CD4-positive, alpha-beta T cell (primary cell): ENCODE measurements at regions of chr22 and their contacts with region 1.

Region 1: DNA sequence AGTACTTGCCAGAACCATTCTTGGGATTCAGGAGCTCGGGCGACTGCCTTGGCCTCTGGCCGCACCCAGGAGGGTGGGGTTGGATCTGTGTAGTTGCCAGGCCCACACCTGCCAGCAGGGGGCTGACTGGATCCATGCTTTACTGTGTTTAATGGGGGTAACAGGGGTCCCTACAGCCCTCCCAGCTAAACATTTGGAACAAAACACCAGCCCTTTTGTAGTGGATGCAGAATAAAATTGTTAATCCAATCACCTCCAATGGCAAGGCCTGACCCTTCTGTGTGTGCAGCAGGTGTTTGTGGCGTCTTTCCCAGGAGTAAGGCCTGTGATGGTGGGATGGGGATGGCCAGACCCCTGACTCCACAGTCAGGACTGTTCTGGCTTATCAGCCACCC is 22.5 kb downstream of the SUN2 start:
- DNase-seq: peak in 11 of 14 experiments; percentile 45 to 71 (median 54)
- ATAC-seq: peak; percentile 54
- H3K4me3 ChIP-seq: no peak overlapping the region
- H3K4me3 Mint-ChIP-seq: peak overlapping the region; percentile 4
- H3K27ac ChIP-seq: peak overlapping the region; percentile 14 to 35
- H3K27ac Mint-ChIP-seq: peak overlapping the region; percentile 88
- H3K4me1 ChIP-seq: peaks cover 54% of the 10 kb centered on the region
- H3K4me1 Mint-ChIP-seq: peaks cover 67% of the 10 kb centered on the region
- H3K27me3 ChIP-seq: no peaks in the 10 kb centered on the region
- H3K27me3 Mint-ChIP-seq: no peaks in the 10 kb centered on the region
- CTCF ChIP-seq: peak; percentile 87

Region 2: DNA sequence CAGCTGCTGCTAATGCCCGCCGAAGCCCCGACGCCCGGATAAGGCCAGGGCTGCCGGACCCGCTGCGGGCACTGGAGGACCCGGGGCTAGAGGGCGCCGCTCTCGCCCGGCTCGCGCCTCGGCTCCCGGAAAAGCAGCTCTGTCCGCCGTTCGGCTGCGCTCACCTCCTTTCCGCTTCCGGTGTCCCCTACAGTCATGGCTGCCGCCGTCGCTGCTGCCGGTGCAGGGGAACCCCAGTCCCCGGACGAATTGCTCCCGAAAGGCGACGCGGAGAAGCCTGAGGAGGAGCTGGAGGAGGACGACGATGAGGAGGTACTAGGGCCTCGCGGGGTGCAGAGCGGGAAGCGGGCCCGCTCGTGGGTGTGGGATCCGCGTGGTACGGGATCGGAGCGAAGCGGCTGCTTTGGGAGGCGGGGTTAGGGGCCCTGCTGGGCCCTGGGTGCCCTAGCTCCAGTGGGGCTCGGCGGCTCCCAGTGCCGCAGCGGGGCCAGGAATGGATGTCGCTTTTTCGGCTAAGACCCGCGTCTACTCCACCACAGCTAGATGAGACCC is 51.5 kb before region 1 on chr22 and contains the start of gene TOMM22:
- CTCF ChIA-PET with region 1: interaction called, 6 read pairs
- POLR2A ChIA-PET with region 1: interaction called, 19 read pairs
- intact Hi-C with region 1: no loop called
- DNase-seq: peak; percentile 67 to 92 (median 80)
- ATAC-seq: peak; percentile 88
- H3K4me3 ChIP-seq: peak within 1 kb of the TSS; percentile 98
- H3K4me3 Mint-ChIP-seq: peak within 1 kb of the TSS; percentile 98
- H3K27ac ChIP-seq: peak within 1 kb of the TSS; percentile 79 to 84
- H3K27ac Mint-ChIP-seq: peak within 1 kb of the TSS; percentile 87
- H3K4me1 ChIP-seq: peaks cover 18% of the 10 kb centered on the region
- H3K4me1 Mint-ChIP-seq: peaks cover 24% of the 10 kb centered on the region
- H3K27me3 ChIP-seq: no peaks in the 10 kb centered on the region
- H3K27me3 Mint-ChIP-seq: no peaks in the 10 kb centered on the region
- CTCF ChIP-seq: peak; percentile 65
- total RNA-seq, gene TOMM22: 53.7 to 54.8 TPM

Region 3: GRCh38 chr22:38718414-38718813 is 14.9 kb before region 1 on chr22:
- CTCF ChIA-PET with region 1: interaction called, 5 read pairs
- POLR2A ChIA-PET with region 1: interaction called, 48 read pairs
- intact Hi-C with region 1: no loop called
- DNase-seq: peak in 1 of 14 experiments; percentile 31
- ATAC-seq: peak; percentile 39
- H3K4me3 ChIP-seq: no peak overlapping the region
- H3K4me3 Mint-ChIP-seq: no peak overlapping the region
- H3K27ac ChIP-seq: no peak overlapping the region
- H3K27ac Mint-ChIP-seq: peak overlapping the region; percentile 15
- H3K4me1 ChIP-seq: peaks cover 20% of the 10 kb centered on the region
- H3K4me1 Mint-ChIP-seq: peaks cover 20% of the 10 kb centered on the region
- H3K27me3 ChIP-seq: no peaks in the 10 kb centered on the region
- H3K27me3 Mint-ChIP-seq: no peaks in the 10 kb centered on the region
- CTCF ChIP-seq: no peak

Region 4: GRCh38 chr22:38745676-38746460 is 12.5 kb after region 1 on chr22:
- CTCF ChIA-PET with region 1: interaction called, 12 read pairs
- POLR2A ChIA-PET with region 1: interaction called, 752 read pairs
- intact Hi-C with region 1: loop called in 1 of 2 experiments (anchors 2 kb)
- DNase-seq: no peak
- ATAC-seq: no peak
- H3K4me3 ChIP-seq: no peak overlapping the region
- H3K4me3 Mint-ChIP-seq: no peak overlapping the region
- H3K27ac ChIP-seq: peak overlapping the region in 1 of 2 donors; percentile 50
- H3K27ac Mint-ChIP-seq: peak overlapping the region; percentile 84
- H3K4me1 ChIP-seq: peaks cover 77% of the 10 kb centered on the region
- H3K4me1 Mint-ChIP-seq: peaks cover 47% of the 10 kb centered on the region
- H3K27me3 ChIP-seq: no peaks in the 10 kb centered on the region
- H3K27me3 Mint-ChIP-seq: no peaks in the 10 kb centered on the region
- CTCF ChIP-seq: no peak

Region 5: DNA sequence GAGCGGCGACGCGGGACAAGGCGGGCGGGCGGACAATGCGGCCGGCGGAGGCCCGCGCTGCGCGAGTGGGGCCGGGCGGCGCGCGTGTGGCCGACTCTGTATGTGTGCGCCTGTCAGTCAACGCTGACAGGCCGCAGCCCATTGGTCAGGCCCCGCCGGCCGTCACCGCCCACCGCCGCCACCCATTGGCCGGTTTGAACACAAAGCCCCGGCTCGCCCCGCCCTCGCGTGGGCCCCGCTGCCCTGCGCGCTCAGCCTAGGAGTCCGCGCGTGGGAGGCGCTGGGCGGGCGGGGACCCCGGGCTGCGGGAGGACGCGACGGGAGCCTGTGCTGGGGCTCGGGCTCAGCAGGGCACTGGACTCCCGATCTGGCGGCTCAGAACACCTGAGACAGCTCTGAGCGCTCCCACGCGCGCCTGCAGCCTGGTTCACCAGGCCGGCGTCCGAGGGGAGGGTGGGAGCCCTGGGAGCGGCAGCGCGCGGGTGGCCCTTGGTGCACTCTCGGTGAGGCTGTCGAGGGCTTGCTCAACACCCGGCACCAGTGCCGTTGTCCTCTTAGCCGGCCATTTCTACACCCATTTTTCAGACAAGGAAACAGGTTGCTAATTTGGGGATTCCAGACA is 22.7 kb after region 1 on chr22 and contains the start of gene SUN2:
- CTCF ChIA-PET with region 1: interaction called, 15 read pairs
- POLR2A ChIA-PET with region 1: interaction called, 752 read pairs
- intact Hi-C with region 1: no loop called
- DNase-seq: peak; percentile 85 to 96 (median 94)
- ATAC-seq: peak; percentile 63
- H3K4me3 ChIP-seq: peak within 1 kb of the TSS; percentile 98
- H3K4me3 Mint-ChIP-seq: peak within 1 kb of the TSS; percentile 99
- H3K27ac ChIP-seq: peak within 1 kb of the TSS; percentile 75 to 81
- H3K27ac Mint-ChIP-seq: peak within 1 kb of the TSS; percentile 99
- H3K4me1 ChIP-seq: peaks cover 73% of the 10 kb centered on the region
- H3K4me1 Mint-ChIP-seq: peaks cover 69% of the 10 kb centered on the region
- H3K27me3 ChIP-seq: no peaks in the 10 kb centered on the region
- H3K27me3 Mint-ChIP-seq: no peaks in the 10 kb centered on the region
- CTCF ChIP-seq: no peak
- total RNA-seq, gene SUN2: 440 to 453 TPM

Region 6: DNA sequence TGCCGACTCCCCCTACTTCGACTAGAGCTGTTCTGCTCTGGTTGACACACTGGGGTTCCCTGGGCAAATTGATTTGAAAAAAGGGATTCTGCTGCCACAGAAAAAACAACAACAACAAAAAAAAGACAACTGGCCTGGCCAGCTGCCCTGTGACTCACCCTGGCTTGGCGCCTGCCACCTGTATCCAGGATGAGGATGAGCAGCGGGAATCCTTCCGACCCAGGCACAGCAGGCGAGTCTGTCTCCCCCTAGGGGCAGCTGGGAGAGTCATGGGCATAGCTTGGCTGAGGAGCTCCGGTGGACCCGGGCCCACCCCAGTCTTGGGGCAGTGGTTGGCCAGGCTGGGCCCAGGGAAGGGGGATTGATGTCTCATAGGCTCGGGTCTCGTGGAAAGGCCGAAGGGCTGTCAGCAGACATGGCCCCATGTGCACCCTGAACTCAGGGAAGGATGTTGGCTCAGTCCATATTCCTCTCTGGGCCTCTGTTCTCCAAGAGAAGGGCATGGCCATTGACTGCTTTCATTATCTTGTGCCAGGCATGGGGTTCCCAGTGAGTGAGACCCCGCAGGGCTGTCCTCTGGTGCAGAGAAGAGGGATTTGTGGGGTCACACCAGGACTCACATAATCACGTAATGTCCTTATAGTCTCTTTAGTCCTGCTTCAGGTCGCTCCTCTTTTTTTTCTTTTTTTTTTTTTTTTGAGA is 32.9 kb after region 1 on chr22:
- CTCF ChIA-PET with region 1: interaction called, 7 read pairs
- POLR2A ChIA-PET with region 1: interaction called, 752 read pairs
- intact Hi-C with region 1: loop called in 1 of 2 experiments (anchors 2 kb)
- DNase-seq: peak in 13 of 14 experiments; percentile 22 to 75 (median 40)
- ATAC-seq: peak; percentile 65
- H3K4me3 ChIP-seq: no peak overlapping the region
- H3K4me3 Mint-ChIP-seq: no peak overlapping the region
- H3K27ac ChIP-seq: no peak overlapping the region
- H3K27ac Mint-ChIP-seq: no peak overlapping the region
- H3K4me1 ChIP-seq: peaks cover 22% of the 10 kb centered on the region
- H3K4me1 Mint-ChIP-seq: peaks cover 9% of the 10 kb centered on the region
- H3K27me3 ChIP-seq: no peaks in the 10 kb centered on the region
- H3K27me3 Mint-ChIP-seq: no peaks in the 10 kb centered on the region
- CTCF ChIP-seq: peak; percentile 69

Region 7: GRCh38 chr22:38843201-38843715 is 109.9 kb after region 1 on chr22:
- CTCF ChIA-PET with region 1: no interaction called
- POLR2A ChIA-PET with region 1: interaction called, 33 read pairs
- intact Hi-C with region 1: loop called in 1 of 2 experiments (anchors 5 kb)
- DNase-seq: peak in 13 of 14 experiments; percentile 23 to 87 (median 59)
- ATAC-seq: peak; percentile 88
- H3K4me3 ChIP-seq: no peak overlapping the region
- H3K4me3 Mint-ChIP-seq: no peak overlapping the region
- H3K27ac ChIP-seq: no peak overlapping the region
- H3K27ac Mint-ChIP-seq: no peak overlapping the region
- H3K4me1 ChIP-seq: peaks cover 24% of the 10 kb centered on the region
- H3K4me1 Mint-ChIP-seq: peaks cover 30% of the 10 kb centered on the region
- H3K27me3 ChIP-seq: peaks cover 5 to 12% of the 10 kb centered on the region in 2 experiments
- H3K27me3 Mint-ChIP-seq: peaks cover 21% of the 10 kb centered on the region
- CTCF ChIP-seq: no peak